Activated CD8-positive, alpha-beta T cell treated with anti-CD3 and anti-CD28 coated beads, Interleukin-2, amount 10 ng/mL, durations not matched to agents 7 days and 5 days (primary cell): ENCODE measurements at regions of chr3 and their contacts with region 1.

Region 1: GRCh38 chr3:172595641-172596393 is 72.6 kb upstream of the TNFSF10 start:
- DNase-seq: peak; percentile 69
- ATAC-seq: no peak
- H3K4me3 Mint-ChIP-seq: peak overlapping the region; percentile 83
- H3K27ac Mint-ChIP-seq: peak overlapping the region; percentile 76
- H3K4me1 Mint-ChIP-seq: peaks cover 58% of the 10 kb centered on the region
- H3K27me3 Mint-ChIP-seq: no peaks in the 10 kb centered on the region

Region 2: GRCh38 chr3:172289582-172289981 is 306.2 kb before region 1 on chr3:
- CTCF ChIA-PET with region 1: no interaction called
- POLR2A ChIA-PET with region 1: no interaction called
- DNase-seq: no peak
- ATAC-seq: no peak
- H3K4me3 Mint-ChIP-seq: no peak overlapping the region
- H3K27ac Mint-ChIP-seq: no peak overlapping the region
- H3K4me1 Mint-ChIP-seq: peaks cover 19% of the 10 kb centered on the region
- H3K27me3 Mint-ChIP-seq: no peaks in the 10 kb centered on the region

Region 3: DNA sequence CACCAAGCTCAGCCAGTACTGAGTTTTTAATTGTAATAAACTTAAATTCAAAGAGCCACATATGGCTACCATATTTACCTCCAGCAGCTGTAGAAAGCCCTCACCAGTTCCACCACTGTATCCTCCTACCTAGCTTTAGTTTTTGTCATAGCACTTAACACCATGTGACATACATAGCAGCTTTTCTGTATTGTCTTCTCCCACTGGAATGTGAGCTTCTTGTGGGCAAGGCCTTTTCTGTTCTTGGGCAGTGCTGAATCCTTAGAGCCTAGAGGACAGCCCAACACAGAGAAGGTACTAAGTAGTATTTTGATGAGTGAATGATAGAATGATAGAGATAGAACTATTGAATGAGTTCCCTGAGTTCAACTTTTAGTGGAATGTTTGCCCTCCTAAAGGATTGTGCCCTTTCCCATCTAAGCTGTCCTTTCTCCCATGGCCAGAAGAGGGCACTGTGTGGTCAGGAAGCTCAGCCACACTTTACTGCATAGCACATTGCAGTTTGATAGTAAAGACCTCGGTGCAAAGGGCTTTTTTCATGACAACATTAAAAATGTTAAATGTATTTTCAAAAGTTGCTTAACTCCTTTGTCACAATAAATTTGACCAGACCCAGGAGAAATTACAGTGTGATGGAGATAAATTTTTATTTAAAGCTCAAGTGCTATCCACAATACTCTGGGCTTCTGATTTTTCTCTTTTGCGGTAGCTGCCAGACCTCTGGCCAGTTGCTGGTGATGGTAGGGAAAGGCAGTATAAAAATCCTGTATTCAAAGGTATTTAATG is 263.4 kb before region 1 on chr3:
- CTCF ChIA-PET with region 1: interaction called, 22 read pairs
- POLR2A ChIA-PET with region 1: no interaction called
- DNase-seq: peak; percentile 68
- ATAC-seq: peak; percentile 90
- H3K4me3 Mint-ChIP-seq: no peak overlapping the region
- H3K27ac Mint-ChIP-seq: no peak overlapping the region
- H3K4me1 Mint-ChIP-seq: peaks cover 5% of the 10 kb centered on the region
- H3K27me3 Mint-ChIP-seq: no peaks in the 10 kb centered on the region

Region 4: GRCh38 chr3:172501560-172501959 is 94.3 kb before region 1 on chr3:
- CTCF ChIA-PET with region 1: interaction called, 38 read pairs
- POLR2A ChIA-PET with region 1: no interaction called
- DNase-seq: no peak
- ATAC-seq: no peak
- H3K4me3 Mint-ChIP-seq: no peak overlapping the region
- H3K27ac Mint-ChIP-seq: no peak overlapping the region
- H3K4me1 Mint-ChIP-seq: peaks cover 20% of the 10 kb centered on the region
- H3K27me3 Mint-ChIP-seq: no peaks in the 10 kb centered on the region

Region 5: GRCh38 chr3:172530566-172530965 is 65.3 kb before region 1 on chr3:
- CTCF ChIA-PET with region 1: interaction called, 69 read pairs
- POLR2A ChIA-PET with region 1: interaction called, 15 read pairs
- DNase-seq: peak; percentile 54
- ATAC-seq: peak; percentile 79
- H3K4me3 Mint-ChIP-seq: peak overlapping the region; percentile 8
- H3K27ac Mint-ChIP-seq: peak overlapping the region; percentile 77
- H3K4me1 Mint-ChIP-seq: peaks cover 62% of the 10 kb centered on the region
- H3K27me3 Mint-ChIP-seq: no peaks in the 10 kb centered on the region

Region 6: GRCh38 chr3:172580680-172581401 is 15.0 kb before region 1 on chr3:
- CTCF ChIA-PET with region 1: interaction called, 85 read pairs
- POLR2A ChIA-PET with region 1: interaction called, 25 read pairs
- DNase-seq: no peak
- ATAC-seq: peak; percentile 35
- H3K4me3 Mint-ChIP-seq: peak overlapping the region; percentile 67
- H3K27ac Mint-ChIP-seq: peak overlapping the region; percentile 92
- H3K4me1 Mint-ChIP-seq: peaks cover 97% of the 10 kb centered on the region
- H3K27me3 Mint-ChIP-seq: no peaks in the 10 kb centered on the region

Region 7: DNA sequence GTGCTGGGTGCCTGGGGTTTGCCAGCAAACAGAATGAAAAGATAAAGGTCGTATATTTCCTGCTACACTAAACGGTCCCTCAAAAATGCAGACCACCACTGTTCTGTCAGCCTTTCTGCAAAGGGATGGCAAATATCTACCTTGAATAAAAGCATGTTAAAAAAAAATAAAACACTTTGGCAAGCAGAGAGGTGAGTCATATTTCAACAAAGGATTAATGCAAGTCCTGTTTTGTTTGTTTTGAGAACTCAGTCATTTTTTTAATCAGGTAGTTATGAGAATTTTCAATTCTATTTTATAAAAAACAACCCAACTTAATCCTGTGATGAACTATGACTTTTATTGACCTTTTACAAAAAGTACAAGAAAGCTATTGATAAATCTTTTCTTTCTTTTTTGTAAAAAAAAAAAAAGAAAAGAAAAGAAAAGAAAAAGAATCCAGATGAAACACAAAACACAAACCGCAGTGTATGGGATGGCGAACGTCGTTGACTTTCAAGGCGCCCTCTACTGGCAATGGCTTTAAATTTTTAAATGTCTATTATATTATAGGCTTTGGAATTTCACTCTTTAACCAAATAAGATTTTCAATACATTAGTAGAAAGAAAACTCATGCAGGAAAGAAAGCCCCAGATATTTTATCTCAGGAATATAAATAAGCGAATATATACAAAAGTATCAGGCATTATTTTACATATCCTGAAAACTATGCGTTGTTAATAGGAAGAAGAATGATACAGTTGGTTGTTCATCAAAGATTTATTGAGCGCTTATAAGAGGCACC is 27.3 kb after region 1 on chr3:
- CTCF ChIA-PET with region 1: interaction called, 25 read pairs
- POLR2A ChIA-PET with region 1: no interaction called
- DNase-seq: peak; percentile 62
- ATAC-seq: peak; percentile 67
- H3K4me3 Mint-ChIP-seq: no peak overlapping the region
- H3K27ac Mint-ChIP-seq: no peak overlapping the region
- H3K4me1 Mint-ChIP-seq: peaks cover 10% of the 10 kb centered on the region
- H3K27me3 Mint-ChIP-seq: no peaks in the 10 kb centered on the region

Region 8: DNA sequence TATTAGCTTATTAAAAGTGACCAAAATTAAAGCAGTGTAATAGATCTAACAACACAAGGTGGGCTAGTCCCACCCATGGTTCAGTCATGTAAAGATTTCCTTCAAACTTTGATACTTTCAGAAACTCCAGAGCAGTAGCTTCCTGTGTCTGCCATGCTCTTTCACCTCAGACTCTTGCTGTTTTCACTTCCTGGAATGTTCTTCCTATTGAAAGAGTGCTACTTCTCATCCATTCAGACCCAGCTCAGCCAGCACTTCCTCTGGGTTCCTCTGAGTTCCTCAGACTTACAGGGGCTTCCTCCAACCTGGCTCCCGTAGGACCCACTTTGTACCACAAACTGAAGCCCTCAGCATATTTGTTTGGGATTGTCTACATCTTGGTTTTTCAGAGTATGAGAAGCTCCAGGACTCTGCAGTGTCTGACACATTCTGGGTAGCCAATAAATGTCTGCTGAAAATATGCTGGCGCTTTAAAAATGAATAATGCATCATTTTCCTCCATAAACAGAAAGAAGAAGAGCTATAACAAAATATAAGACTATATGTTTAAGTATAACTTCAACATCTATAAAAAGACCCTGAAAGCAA is 97.0 kb after region 1 on chr3:
- CTCF ChIA-PET with region 1: no interaction called
- POLR2A ChIA-PET with region 1: no interaction called
- DNase-seq: no peak
- ATAC-seq: peak; percentile 27
- H3K4me3 Mint-ChIP-seq: no peak overlapping the region
- H3K27ac Mint-ChIP-seq: peak overlapping the region; percentile 54
- H3K4me1 Mint-ChIP-seq: peaks cover 18% of the 10 kb centered on the region
- H3K27me3 Mint-ChIP-seq: no peaks in the 10 kb centered on the region

Region 9: DNA sequence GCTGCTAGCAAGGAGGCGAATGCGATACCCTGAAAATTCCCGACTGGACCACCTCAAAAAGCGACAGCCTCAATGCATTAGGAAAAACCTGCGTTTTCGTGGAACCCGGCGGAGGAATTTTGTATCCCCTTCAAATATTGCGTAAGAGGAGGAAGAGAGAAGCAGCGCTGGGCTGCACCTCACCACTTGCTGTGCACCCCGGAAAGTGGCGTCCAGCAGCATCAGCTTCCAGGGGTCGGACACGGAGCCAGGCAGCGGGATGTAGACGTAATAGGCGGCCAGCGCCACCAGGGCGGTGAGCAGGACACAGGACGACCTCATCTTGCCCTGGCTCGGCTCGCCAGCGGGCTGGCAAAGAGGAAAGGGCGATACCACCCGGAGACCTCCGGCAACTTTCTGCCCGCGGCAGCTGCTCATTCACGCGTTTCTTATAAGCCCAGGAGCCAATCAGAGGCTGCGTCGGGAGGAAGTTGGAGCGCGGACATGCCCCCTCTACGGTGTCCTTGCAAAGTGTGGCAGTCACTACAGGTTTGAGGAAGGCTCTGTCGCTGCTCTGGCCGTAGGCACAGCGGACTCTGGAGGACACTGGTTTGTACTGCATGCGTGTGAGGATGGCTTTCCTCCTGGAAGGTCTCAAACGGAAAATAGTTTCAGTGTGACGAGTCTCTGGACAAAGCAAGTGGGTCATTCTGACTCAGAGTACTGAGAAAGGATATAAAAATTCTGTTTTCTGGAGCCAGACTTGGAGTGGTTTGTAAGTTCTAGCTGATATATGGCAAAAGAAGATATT is 115.0 kb after region 1 on chr3 and contains the start of gene NCEH1:
- CTCF ChIA-PET with region 1: no interaction called
- POLR2A ChIA-PET with region 1: no interaction called
- DNase-seq: peak; percentile 88
- ATAC-seq: peak; percentile 99
- H3K4me3 Mint-ChIP-seq: peak within 1 kb of the TSS; percentile 92
- H3K27ac Mint-ChIP-seq: peak within 1 kb of the TSS; percentile 73
- H3K4me1 Mint-ChIP-seq: peaks cover 18% of the 10 kb centered on the region
- H3K27me3 Mint-ChIP-seq: peaks cover 3% of the 10 kb centered on the region
- total RNA-seq, gene NCEH1: 8.0 to 8.2 TPM